Cardiac septum (tissue), 1 donor: ENCODE measurements at regions of chr16 and their contacts with region 1.

Region 1: GRCh38 chr16:85202631-85203461 is 90.6 kb upstream of the CIBAR2 start:
- DNase-seq: no peak

Region 2: DNA sequence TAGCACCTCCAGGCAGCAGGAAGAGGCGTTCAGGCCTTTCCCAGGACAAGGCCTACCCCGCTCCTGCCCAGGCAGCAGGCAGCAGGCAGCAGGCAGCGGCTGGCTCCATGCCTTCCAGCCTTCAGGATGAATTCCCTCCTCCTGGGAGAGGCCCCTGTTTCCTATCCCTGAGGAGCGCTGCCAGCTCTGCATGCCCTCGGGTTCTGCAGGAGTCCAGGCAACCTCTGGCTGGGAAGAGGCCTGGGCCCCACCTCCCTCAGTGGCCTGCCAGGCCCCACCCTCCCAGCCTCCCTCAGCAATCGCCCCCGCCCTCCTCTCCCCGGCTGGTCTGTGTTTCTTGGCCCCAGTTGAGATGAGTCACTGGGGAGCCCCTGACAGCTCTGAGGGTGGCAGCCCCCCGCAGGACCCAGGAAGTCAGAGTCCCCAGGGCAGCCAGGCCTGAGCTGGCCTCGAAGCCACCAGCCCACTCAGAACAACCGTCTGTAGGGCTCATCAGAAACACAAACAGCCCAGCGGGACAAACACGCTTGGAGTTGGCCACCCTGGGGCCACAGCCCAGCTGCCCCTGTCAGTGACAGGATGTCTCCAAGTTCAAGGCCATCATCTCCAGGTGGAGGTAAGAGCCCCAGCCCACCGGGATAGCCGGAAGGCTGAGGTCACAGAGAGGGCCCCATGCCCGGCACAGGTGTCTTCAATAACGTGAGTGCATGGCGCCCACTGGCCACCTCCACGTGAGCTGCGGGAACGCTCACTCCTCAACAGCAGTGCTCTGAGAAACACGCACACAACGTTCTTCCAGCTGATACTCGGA is 51.0 kb before region 1 on chr16:
- intact Hi-C with region 1: loop called (anchors 2 kb)
- DNase-seq: peak; percentile 88

Region 3: DNA sequence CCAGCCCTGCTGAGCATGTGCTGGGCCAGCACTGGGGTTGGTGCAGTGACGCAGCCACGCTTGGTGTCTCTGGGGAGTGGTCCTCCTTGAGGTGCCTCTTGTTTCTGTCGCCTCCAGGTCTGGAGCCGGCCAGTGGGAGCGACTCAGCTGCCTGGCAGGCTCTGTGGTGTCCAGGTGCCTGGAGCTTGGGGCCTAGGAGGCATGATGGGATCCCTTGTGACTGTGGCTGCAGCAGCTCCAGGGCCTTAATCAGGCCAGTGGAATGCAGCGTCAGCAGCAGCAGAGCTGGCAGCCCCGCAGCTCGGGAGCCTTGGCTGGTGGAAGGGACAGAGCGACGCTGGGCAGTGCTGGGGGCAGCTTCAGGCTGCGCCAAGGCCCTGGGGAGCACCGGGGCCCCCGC is 15.8 kb before region 1 on chr16:
- intact Hi-C with region 1: loop called (anchors 2 kb)
- DNase-seq: peak; percentile 83